ENCODE measurements at regions of chr22 and their contacts with region 1.

Region 1: DNA sequence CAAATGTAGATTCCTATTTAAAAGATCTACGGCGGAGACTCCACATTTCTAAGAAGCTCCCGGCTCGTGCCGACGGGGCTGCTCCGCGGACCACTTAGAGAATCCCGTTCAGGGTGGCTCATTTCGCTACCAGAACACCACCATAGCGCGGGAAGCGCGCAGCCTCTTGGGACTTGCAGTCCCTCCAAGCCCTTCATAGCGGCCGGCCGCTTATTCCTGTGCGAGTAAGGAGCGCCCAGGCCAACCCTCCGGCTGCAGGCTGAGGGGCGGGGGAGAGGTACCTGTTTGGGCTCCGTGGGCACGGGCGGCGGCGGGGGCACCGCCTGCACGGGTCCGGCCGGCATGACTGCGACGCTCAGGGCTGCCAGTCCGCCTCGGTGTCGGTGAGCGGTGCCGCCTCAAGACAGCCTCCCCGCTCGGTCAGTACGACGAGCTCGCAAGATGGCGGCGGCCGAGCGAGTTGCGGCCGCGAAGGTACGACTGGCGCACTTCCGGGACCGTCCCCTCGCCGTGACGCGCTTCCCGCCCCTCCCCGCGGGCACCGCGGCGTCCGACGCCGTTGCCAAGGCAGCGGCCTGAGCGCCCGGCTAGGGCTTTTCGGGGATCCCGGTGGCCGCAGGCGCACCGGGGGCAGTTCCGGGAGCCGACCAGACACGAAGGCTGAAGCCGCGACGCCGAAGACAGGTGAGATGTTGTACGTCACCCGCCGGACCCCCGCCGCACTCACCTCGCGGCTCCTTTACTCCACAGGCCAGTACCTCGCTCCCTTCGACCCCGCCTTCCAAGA is at the starts of genes CCDC157 and SF3A1:
- DNase-seq: peak; percentile 93
- ATAC-seq: peak; percentile 90
- H3K4me3 Mint-ChIP-seq: peak within 1 kb of the TSS; percentile 97
- H3K27ac Mint-ChIP-seq: peak within 1 kb of the TSS; percentile 91
- H3K4me1 Mint-ChIP-seq: peaks cover 46% of the 10 kb centered on the region
- H3K27me3 Mint-ChIP-seq: no peaks in the 10 kb centered on the region
- total RNA-seq, gene CCDC157: 4.3 to 5.0 TPM
- total RNA-seq, gene SF3A1: 211 to 246 TPM

Region 2: DNA sequence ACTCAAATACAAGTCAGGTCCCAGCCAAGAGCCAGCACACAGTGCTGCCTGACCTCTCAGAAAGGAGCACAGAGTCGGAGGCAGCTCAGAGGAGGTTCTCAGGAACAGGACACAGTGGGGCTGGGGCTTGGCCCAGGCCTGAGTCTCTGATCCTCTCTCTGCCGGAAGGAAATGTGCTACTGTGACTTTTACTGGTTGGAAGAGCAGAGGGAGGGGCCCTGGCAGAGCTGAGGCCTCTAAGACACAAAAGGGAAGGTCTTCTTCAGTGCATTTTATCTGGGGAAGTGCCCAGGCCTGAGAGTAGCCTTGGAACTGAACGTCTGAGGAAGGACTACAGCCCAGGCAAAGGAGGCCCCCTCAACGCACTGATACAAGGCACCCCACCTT is 51.1 kb before region 1 on chr22:
- CTCF ChIA-PET with region 1: interaction called, 4 read pairs
- POLR2A ChIA-PET with region 1: interaction called, 35 read pairs
- DNase-seq: peak; percentile 81
- ATAC-seq: peak; percentile 79
- H3K4me3 Mint-ChIP-seq: peak overlapping the region; percentile 81
- H3K27ac Mint-ChIP-seq: peak overlapping the region; percentile 93
- H3K4me1 Mint-ChIP-seq: peaks cover 100% of the 10 kb centered on the region
- H3K27me3 Mint-ChIP-seq: no peaks in the 10 kb centered on the region

Region 3: GRCh38 chr22:30326706-30327362 is 29.8 kb before region 1 on chr22 and contains the start of gene TBC1D10A:
- CTCF ChIA-PET with region 1: interaction called, 3 read pairs
- POLR2A ChIA-PET with region 1: interaction called, 18 read pairs
- DNase-seq: peak; percentile 95
- ATAC-seq: peak; percentile 91
- H3K4me3 Mint-ChIP-seq: peak within 1 kb of the TSS; percentile 87
- H3K27ac Mint-ChIP-seq: peak within 1 kb of the TSS; percentile 76
- H3K4me1 Mint-ChIP-seq: peaks cover 47% of the 10 kb centered on the region
- H3K27me3 Mint-ChIP-seq: no peaks in the 10 kb centered on the region
- total RNA-seq, gene TBC1D10A: 47.6 to 49.2 TPM

Region 4: DNA sequence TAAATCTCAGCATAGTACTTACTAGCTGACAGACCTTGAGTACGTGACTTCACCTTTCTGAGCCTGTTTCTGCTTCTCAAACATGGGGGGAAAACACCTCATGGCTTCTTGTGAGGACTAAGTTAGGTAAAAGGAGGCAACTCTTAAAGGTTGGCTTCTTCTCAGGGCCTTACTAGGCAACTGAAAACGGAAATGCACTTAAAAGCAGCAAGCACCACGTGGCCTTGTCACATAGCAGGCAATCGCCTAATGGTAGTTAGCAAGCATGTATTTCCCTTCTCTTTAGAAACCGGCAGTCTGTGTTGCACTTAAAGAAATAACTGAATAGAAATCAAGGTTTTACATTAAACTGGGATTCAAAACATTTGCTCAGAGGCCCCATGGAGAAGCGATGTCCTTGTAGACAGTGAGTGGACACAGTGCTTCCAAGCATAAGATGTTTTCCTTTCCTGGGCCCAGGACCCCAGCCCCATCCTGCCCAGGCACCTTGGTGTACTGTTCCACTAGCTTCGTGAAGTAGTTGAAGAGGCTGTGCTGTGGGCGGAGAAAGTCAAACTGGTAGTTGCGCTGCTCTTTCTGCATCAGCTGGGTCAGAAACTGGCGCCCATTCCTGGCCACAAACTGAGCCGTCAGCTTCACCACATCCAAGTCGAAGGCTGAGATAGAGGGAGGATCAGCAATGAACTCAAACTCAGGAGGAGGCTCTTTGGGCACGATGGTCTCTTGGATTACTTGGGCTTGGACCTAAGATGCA is 12.0 kb before region 1 on chr22:
- CTCF ChIA-PET with region 1: interaction called, 3 read pairs
- POLR2A ChIA-PET with region 1: interaction called, 11 read pairs
- DNase-seq: no peak
- ATAC-seq: no peak
- H3K4me3 Mint-ChIP-seq: no peak overlapping the region
- H3K27ac Mint-ChIP-seq: no peak overlapping the region
- H3K4me1 Mint-ChIP-seq: peaks cover 16% of the 10 kb centered on the region
- H3K27me3 Mint-ChIP-seq: no peaks in the 10 kb centered on the region